CD4-positive, alpha-beta memory T cell (primary cell): ENCODE measurements at regions of chr17 and their contacts with region 1.

Region 1: DNA sequence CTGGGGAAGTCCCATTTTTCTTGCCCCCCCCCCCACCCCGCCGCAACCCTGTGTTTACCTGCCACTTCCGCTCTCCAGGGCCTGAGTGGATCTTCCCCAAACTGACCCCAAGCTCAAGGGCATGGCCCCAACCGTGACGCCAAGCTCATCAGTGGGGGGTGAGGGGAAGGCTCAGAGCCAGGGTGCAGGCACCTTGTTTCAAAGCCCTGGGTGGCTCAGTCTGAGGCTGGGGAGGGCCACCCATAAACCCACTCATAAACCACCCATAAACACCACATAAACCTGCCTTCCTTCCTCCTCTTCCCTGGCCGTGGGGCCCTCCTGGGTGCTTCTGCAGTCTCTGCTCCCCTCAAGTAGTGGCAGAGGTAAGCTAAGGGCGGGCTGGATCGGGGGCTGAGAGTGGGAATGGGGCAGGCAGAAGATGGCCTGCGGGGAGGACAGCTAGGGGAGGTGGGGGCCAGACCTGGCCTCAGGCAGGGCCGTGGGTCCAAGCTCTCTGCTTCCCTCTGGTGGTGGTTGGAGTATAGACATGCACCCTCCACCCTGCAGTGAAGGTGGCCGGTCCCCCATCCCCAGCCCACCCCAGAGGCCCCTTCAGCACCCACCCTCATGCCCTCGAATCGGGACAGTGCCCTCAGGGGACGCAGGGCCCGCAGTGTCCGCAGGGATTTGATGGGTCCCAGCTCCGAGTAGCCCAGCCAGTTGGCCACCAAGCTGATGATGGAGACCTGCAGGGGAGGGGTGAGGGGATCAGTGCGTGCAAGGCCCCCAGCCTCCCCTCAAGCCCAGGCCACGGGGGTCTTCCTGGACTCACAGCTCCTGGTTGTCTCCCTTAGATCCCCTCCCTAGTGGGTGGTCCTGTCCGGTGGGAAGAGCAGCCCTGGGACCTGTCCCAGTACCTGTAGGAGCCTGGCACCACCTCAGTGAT is 14.6 kb upstream of the CD79B start:
- DNase-seq: peak; percentile 59 to 69 (median 64)
- H3K4me3 ChIP-seq: peak overlapping the region; percentile 6 to 31
- H3K4me3 Mint-ChIP-seq: peak overlapping the region; percentile 41 to 87 (median 78)
- H3K27ac ChIP-seq: no peak overlapping the region
- H3K27ac Mint-ChIP-seq: peak overlapping the region in 6 of 7 donors; percentile 57 to 88 (median 71)
- H3K4me1 ChIP-seq: peaks cover 22% of the 10 kb centered on the region
- H3K4me1 Mint-ChIP-seq: peaks cover 4 to 31% (median 19%) of the 10 kb centered on the region in 4 donors
- H3K27me3 ChIP-seq: no peaks in the 10 kb centered on the region
- H3K27me3 Mint-ChIP-seq: no peaks in the 10 kb centered on the region

Region 2: GRCh38 chr17:63665527-63666214 is 281.0 kb before region 1 on chr17:
- CTCF ChIA-PET with region 1: no interaction called
- POLR2A ChIA-PET with region 1: no interaction called
- intact Hi-C with region 1: no loop called
- DNase-seq: no peak
- H3K4me3 ChIP-seq: no peak overlapping the region
- H3K4me3 Mint-ChIP-seq: no peak overlapping the region
- H3K27ac ChIP-seq: no peak overlapping the region
- H3K27ac Mint-ChIP-seq: peak overlapping the region in 4 of 7 donors; percentile 30 to 69 (median 40)
- H3K4me1 ChIP-seq: no peaks in the 10 kb centered on the region
- H3K4me1 Mint-ChIP-seq: peaks cover 5 to 15% (median 10%) of the 10 kb centered on the region in 4 donors
- H3K27me3 ChIP-seq: no peaks in the 10 kb centered on the region
- H3K27me3 Mint-ChIP-seq: no peaks in the 10 kb centered on the region

Region 3: DNA sequence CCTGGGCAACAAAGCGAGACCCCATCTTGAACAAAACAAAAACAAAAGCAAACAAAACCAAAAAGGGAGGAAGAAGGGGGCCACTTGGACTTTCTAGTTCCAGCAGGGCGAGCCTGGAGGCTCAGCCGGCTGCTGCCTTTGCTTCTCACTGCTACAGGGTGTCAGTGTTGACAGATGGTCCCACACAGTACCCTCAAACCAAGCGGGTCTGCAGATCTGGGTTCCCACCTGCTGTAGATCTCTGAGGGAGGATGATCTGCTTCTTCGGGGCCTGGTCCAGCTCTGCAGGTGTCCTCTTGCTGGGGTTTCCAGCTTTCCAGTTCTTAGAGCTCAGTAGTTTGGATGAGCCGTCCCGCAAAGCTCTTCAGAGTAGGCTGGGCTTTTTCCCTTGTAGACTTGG is 42.4 kb before region 1 on chr17:
- CTCF ChIA-PET with region 1: interaction called, 13 read pairs
- POLR2A ChIA-PET with region 1: no interaction called
- intact Hi-C with region 1: no loop called
- DNase-seq: no peak
- H3K4me3 ChIP-seq: no peak overlapping the region
- H3K4me3 Mint-ChIP-seq: no peak overlapping the region
- H3K27ac ChIP-seq: no peak overlapping the region
- H3K27ac Mint-ChIP-seq: peak overlapping the region in 1 of 7 donors; percentile 47
- H3K4me1 ChIP-seq: no peaks in the 10 kb centered on the region
- H3K4me1 Mint-ChIP-seq: peaks cover 3 to 8% (median 4%) of the 10 kb centered on the region in 4 donors
- H3K27me3 ChIP-seq: no peaks in the 10 kb centered on the region
- H3K27me3 Mint-ChIP-seq: peaks cover 2 to 3% of the 10 kb centered on the region in 2 donors

Region 4: DNA sequence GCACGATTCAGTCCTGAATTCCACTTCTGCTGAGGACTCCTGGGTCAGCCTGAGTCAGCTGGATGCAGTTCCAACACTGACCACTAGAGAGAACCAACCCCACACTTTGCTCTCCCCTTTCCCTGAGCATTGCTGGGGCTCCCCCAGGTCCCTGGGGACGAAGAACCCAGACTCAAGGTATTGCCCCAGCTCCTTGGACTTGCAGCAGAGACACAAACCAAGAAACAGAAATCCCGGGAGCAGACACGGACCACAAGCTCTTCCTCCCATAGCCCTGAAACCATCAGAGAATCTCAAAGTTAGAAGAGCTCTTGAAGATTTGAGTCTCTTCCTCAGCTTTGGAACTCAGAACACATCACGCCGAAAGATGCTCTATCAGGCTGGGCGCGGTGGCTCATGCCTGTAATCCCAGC is 27.4 kb before region 1 on chr17:
- CTCF ChIA-PET with region 1: interaction called, 131 read pairs
- POLR2A ChIA-PET with region 1: interaction called, 18 read pairs
- intact Hi-C with region 1: loop called (anchors 1 kb)
- DNase-seq: peak; percentile 70 to 81 (median 75)
- H3K4me3 ChIP-seq: no peak overlapping the region
- H3K4me3 Mint-ChIP-seq: no peak overlapping the region
- H3K27ac ChIP-seq: no peak overlapping the region
- H3K27ac Mint-ChIP-seq: peak overlapping the region in 6 of 7 donors; percentile 38 to 87 (median 62)
- H3K4me1 ChIP-seq: peaks cover 7% of the 10 kb centered on the region
- H3K4me1 Mint-ChIP-seq: peaks cover 6% of the 10 kb centered on the region in 4 donors
- H3K27me3 ChIP-seq: no peaks in the 10 kb centered on the region
- H3K27me3 Mint-ChIP-seq: peaks cover 0 to 2% of the 10 kb centered on the region in 2 donors

Region 5: DNA sequence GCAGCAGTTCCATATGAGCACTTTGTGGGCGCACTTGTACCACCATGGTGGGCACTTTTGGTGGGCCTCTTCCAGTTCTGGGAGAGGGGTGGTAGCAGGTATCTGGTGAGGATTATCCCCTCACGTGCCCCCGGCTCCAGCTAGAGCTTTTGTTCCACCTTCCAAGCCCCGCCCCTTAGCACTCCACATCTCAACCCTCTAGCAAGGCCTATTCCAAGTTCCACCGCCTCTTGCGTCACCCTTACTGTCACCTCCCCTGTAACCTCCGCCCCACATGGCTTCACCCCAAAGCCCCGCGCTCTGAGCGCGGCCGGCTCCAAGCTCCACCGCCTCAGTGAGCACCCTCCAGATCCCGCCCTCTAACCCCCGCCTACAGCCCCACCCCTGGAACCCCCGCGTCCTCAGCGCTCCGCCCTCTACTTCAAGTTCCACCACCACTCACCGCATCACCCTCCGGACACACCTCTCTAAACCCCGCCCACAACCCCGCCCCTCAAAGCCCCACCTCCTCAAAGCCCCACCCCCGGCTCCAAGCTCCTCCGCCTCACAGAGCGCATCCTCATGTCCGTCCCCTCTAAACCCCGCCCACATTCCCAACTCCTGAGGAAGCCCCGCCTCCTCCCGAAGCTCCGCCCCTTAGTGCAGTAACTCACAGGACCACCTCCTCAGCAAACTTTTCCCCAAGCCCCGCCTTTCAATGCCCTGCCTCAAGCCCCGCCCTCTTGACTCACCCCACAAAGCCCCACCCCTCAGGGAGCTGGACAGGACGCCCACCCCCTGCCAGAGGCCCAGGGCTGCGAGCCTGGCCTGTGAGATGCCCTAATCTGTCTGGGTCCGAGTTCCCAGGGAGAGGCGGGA is 14.9 kb after region 1 on chr17:
- CTCF ChIA-PET with region 1: interaction called, 20 read pairs
- POLR2A ChIA-PET with region 1: interaction called, 6 read pairs
- intact Hi-C with region 1: no loop called
- DNase-seq: peak in 3 of 5 donors; percentile 19 to 57 (median 25)
- H3K4me3 ChIP-seq: no peak overlapping the region
- H3K4me3 Mint-ChIP-seq: peak overlapping the region in 5 of 8 donors; percentile 17 to 70 (median 35)
- H3K27ac ChIP-seq: no peak overlapping the region
- H3K27ac Mint-ChIP-seq: peak overlapping the region in 2 of 7 donors; percentile 50 to 76
- H3K4me1 ChIP-seq: peaks cover 10% of the 10 kb centered on the region
- H3K4me1 Mint-ChIP-seq: peaks cover 4 to 27% (median 6%) of the 10 kb centered on the region in 4 donors
- H3K27me3 ChIP-seq: no peaks in the 10 kb centered on the region
- H3K27me3 Mint-ChIP-seq: no peaks in the 10 kb centered on the region

Region 6: GRCh38 chr17:63991611-63992010 is 44.9 kb after region 1 on chr17:
- CTCF ChIA-PET with region 1: interaction called, 18 read pairs
- POLR2A ChIA-PET with region 1: interaction called, 11 read pairs
- intact Hi-C with region 1: loop called (anchors 5 kb)
- DNase-seq: no peak
- H3K4me3 ChIP-seq: no peak overlapping the region
- H3K4me3 Mint-ChIP-seq: peak overlapping the region in 2 of 8 donors; percentile 12 to 20
- H3K27ac ChIP-seq: no peak overlapping the region
- H3K27ac Mint-ChIP-seq: peak overlapping the region in 6 of 7 donors; percentile 6 to 81 (median 57)
- H3K4me1 ChIP-seq: peaks cover 42% of the 10 kb centered on the region
- H3K4me1 Mint-ChIP-seq: peaks cover 36 to 70% (median 44%) of the 10 kb centered on the region in 4 donors
- H3K27me3 ChIP-seq: no peaks in the 10 kb centered on the region
- H3K27me3 Mint-ChIP-seq: no peaks in the 10 kb centered on the region